MCF 10A (cell line): ENCODE measurements at regions of chr20 and their contacts with region 1.

Region 1: GRCh38 chr20:47196091-47197081 is 160.1 kb downstream of the ZMYND8 start:
- DNase-seq: peak; percentile 70
- H3K4me3 Mint-ChIP-seq: no peak overlapping the region
- H3K27ac Mint-ChIP-seq: no peak overlapping the region
- H3K4me1 Mint-ChIP-seq: peaks cover 5% of the 10 kb centered on the region
- H3K27me3 Mint-ChIP-seq: no peaks in the 10 kb centered on the region
- CTCF ChIP-seq: peak; percentile 93

Region 2: GRCh38 chr20:46994341-46994740 is 202.0 kb before region 1 on chr20:
- CTCF ChIA-PET with region 1: no interaction called
- POLR2A ChIA-PET with region 1: no interaction called
- intact Hi-C with region 1: no loop called
- DNase-seq: no peak
- H3K4me3 Mint-ChIP-seq: no peak overlapping the region
- H3K27ac Mint-ChIP-seq: no peak overlapping the region
- H3K4me1 Mint-ChIP-seq: peaks cover 8% of the 10 kb centered on the region
- H3K27me3 Mint-ChIP-seq: peaks cover 13% of the 10 kb centered on the region
- CTCF ChIP-seq: no peak

Region 3: GRCh38 chr20:47213966-47214365 is 17.6 kb after region 1 on chr20:
- CTCF ChIA-PET with region 1: interaction called, 13 read pairs
- POLR2A ChIA-PET with region 1: no interaction called
- intact Hi-C with region 1: no loop called
- DNase-seq: no peak
- H3K4me3 Mint-ChIP-seq: no peak overlapping the region
- H3K27ac Mint-ChIP-seq: no peak overlapping the region
- H3K4me1 Mint-ChIP-seq: peaks cover 5% of the 10 kb centered on the region
- H3K27me3 Mint-ChIP-seq: no peaks in the 10 kb centered on the region
- CTCF ChIP-seq: no peak

Region 4: DNA sequence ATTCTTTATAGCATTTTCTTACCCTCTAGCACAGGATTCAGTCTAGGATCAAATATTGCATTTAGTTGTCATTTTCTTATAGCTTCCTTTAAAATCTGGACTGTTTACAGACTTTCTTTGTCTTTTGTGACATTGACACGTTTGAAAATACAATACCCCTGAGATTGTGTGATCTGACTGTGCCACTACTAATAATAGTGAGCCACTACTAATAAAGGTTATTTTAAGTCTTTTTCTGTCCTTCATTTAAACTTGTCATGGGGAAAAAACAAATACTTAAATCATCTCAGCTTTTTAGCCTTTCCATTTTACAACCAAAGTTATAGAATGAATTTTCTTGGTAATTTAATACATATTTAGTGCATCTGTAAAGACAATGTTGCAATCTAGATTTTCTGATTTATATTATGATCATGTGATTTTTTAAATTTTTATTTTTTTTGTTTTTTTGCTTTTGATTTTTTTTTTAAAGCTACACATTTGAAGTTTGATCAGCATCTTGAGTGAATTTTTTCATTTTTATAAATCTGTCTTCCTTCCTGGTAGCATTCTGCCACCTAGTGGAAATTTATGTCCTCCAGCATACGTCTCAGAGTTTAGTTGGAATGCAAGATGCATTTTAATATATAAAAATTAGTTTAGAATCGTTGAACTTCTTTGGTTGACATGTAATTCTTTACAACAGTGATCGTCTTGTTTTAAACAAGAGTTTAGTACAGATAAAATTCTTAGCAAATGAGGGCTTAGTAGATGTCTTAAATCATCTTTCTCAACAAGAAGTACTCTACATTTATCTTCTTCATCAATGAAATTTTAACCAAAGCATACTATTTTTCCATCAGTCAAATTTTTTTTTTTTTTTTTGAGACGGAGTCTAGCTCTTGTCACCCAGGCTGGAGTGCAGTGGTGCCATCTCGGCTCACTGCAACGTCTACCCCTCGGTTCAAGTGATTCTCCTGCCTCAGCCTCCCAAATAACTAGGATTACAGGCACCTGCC is 424.7 kb after region 1 on chr20:
- CTCF ChIA-PET with region 1: interaction called, 4 read pairs
- POLR2A ChIA-PET with region 1: no interaction called
- intact Hi-C with region 1: loop called (anchors 1 kb)
- DNase-seq: peak; percentile 53
- H3K4me3 Mint-ChIP-seq: no peak overlapping the region
- H3K27ac Mint-ChIP-seq: peak overlapping the region; percentile 19
- H3K4me1 Mint-ChIP-seq: peaks cover 12% of the 10 kb centered on the region
- H3K27me3 Mint-ChIP-seq: no peaks in the 10 kb centered on the region
- CTCF ChIP-seq: peak; percentile 72